ENCODE measurements at regions of chr12 and their contacts with region 1.

Region 1: DNA sequence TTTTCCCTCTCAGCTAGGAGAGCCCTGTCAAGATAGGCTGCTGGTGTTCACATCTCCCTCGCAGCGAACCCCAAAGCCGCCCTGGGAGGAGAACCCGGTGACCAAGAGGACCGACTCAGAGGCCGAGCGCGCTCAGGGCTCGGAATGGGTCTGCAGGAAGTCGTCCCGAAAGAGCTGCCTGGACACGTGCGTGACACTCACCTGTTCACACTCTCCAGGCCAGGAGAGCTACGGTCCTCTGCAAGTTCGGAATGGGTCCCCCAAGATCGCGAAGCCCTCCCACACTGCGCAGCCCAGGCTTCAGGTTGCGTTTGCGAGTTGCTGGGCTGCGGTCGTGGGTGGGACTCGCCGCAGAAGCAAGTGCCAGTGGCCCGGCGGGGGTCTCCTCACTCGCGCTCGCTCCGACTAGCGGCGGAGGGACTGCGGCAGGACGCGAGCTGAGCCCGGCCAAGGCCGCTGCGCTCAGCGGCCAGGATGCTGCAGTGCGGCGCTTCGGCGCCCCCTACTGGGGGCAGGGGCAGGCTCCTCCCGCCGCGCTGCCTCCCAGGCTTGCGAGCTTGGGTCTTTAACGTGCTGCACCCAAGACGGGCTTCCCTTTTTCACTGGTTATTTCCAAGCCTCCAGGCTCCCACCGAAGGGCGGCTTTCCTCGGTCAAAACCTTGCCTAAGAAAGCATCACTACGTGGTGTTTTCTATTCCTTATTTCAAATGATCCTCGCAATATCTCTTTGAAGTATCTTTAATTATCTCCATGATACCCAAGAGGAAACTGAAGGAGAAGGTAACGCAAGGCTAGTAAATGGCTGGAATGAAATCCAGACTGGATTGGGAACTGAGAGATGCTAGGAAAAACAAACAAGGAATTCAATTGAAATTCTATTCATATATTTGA is at the start of gene RERG:
- H3K4me3 Mint-ChIP-seq: peak within 1 kb of the TSS; percentile 65
- H3K27ac Mint-ChIP-seq: no peak within 1 kb of the TSS
- H3K4me1 Mint-ChIP-seq: peaks cover 8% of the 10 kb centered on the region
- H3K27me3 Mint-ChIP-seq: peaks cover 26% of the 10 kb centered on the region

Region 2: GRCh38 chr12:14723763-14724162 is 497.5 kb before region 1 on chr12:
- intact Hi-C with region 1: loop called (anchors 5 kb)
- H3K4me3 Mint-ChIP-seq: no peak overlapping the region
- H3K27ac Mint-ChIP-seq: no peak overlapping the region
- H3K4me1 Mint-ChIP-seq: no peaks in the 10 kb centered on the region
- H3K27me3 Mint-ChIP-seq: peaks cover 1% of the 10 kb centered on the region

Region 3: DNA sequence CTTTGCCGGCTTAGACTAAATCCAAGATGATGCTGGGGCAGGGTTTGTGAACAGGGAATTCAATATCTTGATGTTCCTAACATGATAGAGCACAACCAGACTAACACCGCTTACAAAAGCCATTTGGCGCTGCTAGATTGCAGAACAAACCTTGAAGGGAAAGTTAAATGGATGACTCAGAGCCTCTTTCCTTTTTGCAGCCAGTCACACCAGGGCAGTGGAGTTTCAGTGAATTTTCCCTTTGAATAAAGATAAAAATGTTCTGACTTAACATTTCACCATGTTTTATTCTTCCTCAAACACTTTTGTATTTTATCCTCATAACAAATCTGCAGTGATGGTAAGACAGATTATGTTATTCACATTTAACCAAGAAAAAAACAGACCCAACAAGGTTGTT is 201.1 kb before region 1 on chr12:
- intact Hi-C with region 1: no loop called
- H3K4me3 Mint-ChIP-seq: no peak overlapping the region
- H3K27ac Mint-ChIP-seq: no peak overlapping the region
- H3K4me1 Mint-ChIP-seq: peaks cover 11% of the 10 kb centered on the region
- H3K27me3 Mint-ChIP-seq: no peaks in the 10 kb centered on the region

Measured in dendritic cell treated with granulocyte-macrophage colony-stimulating factor and Interleukin-4, amounts not matched to agents 40 ng/mL and 50 ng/mL, for 4 days (primary cell).